ENCODE measurements at regions of chr3 and their contacts with region 1.

Region 1: DNA sequence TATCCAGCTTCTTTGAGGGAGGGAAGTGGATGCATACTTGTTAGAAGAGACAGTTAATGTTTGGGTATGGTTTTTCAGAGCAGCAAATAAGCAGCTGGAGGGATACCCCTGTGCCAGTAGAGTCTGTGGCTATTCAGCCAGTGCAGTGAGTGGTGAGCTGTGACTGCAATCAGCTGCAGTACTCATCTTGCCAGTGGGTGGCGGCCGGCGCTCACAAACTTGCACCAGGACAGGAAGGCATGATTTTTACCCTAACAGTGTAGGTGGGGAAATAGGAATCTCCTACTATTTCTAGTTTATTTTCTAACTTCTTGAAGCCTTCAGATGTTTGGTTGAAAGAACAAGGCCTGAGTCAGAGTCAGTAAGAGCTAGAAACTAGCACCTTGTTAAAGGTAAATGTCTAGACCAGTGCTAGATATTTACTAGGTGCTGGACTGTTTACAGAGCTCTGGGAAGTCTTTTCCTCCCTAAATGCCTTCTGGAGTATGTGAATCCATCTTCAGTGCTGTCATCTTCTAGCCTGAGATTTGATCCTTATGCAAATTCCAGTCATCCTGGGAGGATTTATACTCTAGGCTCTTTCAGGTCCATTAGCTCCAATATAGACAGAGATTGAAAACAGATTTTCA is 23.6 kb downstream of the TIMP4 start:
- DNase-seq: peak; percentile 37
- H3K4me3 ChIP-seq: no peak overlapping the region
- CTCF ChIP-seq: peak; percentile 95

Region 2: GRCh38 chr3:12484198-12484974 is 349.2 kb after region 1 on chr3 and contains the start of gene TSEN2:
- in situ Hi-C with region 1: loop called (anchors 25 kb)
- DNase-seq: peak; percentile 76
- H3K4me3 ChIP-seq: peak within 1 kb of the TSS; percentile 77
- CTCF ChIP-seq: peak; percentile 21